ENCODE measurements at regions of chr10 and their contacts with region 1.

Region 1: GRCh38 chr10:124741281-124741921 is 2.8 kb downstream of the FAM53B start:
- DNase-seq: peak; percentile 86
- H3K4me3 Mint-ChIP-seq: peak overlapping the region; percentile 85
- H3K27ac Mint-ChIP-seq: peak overlapping the region; percentile 73
- H3K4me1 Mint-ChIP-seq: peaks cover 48% of the 10 kb centered on the region
- H3K27me3 Mint-ChIP-seq: no peaks in the 10 kb centered on the region
- CTCF ChIP-seq: peak; percentile 79

Region 2: DNA sequence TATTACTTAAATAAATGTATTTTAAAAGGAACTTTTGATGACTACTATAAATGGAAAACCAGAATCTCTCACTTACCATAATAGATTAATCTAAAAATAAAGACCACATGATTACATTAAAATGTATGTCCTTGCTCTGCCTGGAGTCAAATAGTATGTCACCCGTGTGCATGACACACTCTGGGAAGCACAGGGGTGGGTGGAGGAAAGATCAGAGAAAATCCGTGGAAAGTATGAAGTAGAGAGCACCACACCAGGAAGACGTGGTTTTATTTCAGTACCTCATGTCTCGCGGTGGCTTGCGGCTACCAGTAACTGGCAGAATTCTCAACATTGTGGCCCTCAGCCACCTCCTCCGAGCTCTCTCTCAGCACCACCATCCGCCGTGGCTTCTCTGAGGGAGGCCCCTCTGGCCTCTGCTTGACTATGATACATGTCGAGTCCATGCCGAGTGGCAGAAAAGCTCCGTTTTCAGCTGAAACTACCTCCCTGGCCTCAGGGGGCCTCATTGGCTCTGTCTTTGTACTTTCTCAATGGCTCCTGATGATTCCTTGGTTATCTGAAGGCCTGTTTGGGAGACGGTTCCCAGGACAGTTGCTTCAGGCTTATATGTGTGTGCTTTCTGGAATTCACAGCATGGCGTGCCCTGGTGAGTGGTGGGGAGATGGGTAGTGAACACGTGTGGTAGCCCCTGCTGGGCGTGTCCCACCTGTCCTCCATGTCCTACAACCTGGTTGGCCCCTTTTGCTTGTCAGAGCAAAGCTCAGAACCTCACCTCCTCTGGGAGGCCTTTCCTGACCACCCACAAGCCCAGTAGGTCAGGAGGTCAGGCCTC is 230.0 kb before region 1 on chr10:
- CTCF ChIA-PET with region 1: no interaction called
- POLR2A ChIA-PET with region 1: no interaction called
- intact Hi-C with region 1: no loop called
- DNase-seq: no peak
- H3K4me3 Mint-ChIP-seq: no peak overlapping the region
- H3K27ac Mint-ChIP-seq: no peak overlapping the region
- H3K4me1 Mint-ChIP-seq: peaks cover 5% of the 10 kb centered on the region
- H3K27me3 Mint-ChIP-seq: no peaks in the 10 kb centered on the region
- CTCF ChIP-seq: no peak

Region 3: GRCh38 chr10:124539935-124540641 is 201.3 kb before region 1 on chr10:
- CTCF ChIA-PET with region 1: interaction called, 45 read pairs
- POLR2A ChIA-PET with region 1: interaction called, 4 read pairs
- intact Hi-C with region 1: loop called (anchors 1 kb)
- DNase-seq: peak; percentile 34
- H3K4me3 Mint-ChIP-seq: no peak overlapping the region
- H3K27ac Mint-ChIP-seq: no peak overlapping the region
- H3K4me1 Mint-ChIP-seq: no peaks in the 10 kb centered on the region
- H3K27me3 Mint-ChIP-seq: no peaks in the 10 kb centered on the region
- CTCF ChIP-seq: peak; percentile 65

Region 4: DNA sequence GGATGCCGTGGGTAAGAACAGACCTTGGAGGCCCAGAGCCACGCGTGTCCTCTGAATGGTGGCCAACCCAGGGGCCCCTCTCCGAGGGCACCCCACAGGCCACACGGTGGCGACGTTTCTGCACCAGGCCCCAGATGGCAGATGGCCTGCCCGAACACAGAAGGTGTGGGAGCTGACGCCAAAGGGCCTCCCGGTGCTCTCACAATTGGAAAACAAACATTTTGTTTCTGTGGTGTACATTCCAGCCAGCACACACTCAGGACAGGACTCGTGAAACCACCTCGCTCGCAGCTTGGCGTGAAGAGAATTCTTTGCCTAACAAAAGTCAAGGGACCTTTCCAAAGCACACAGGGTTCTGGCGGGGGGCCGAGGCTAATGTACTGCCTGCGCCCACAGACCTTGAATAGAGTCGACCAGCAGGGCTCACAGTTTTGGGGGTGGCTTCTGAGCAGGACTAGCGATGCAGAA is 109.3 kb before region 1 on chr10:
- CTCF ChIA-PET with region 1: interaction called, 9 read pairs
- POLR2A ChIA-PET with region 1: interaction called, 4 read pairs
- intact Hi-C with region 1: loop called (anchors 1 kb)
- DNase-seq: peak; percentile 22
- H3K4me3 Mint-ChIP-seq: no peak overlapping the region
- H3K27ac Mint-ChIP-seq: peak overlapping the region; percentile 93
- H3K4me1 Mint-ChIP-seq: peaks cover 18% of the 10 kb centered on the region
- H3K27me3 Mint-ChIP-seq: no peaks in the 10 kb centered on the region
- CTCF ChIP-seq: peak; percentile 38

Region 5: GRCh38 chr10:124688889-124689670 is 52.3 kb before region 1 on chr10:
- CTCF ChIA-PET with region 1: interaction called, 18 read pairs
- POLR2A ChIA-PET with region 1: interaction called, 4 read pairs
- intact Hi-C with region 1: no loop called
- DNase-seq: peak; percentile 18
- H3K4me3 Mint-ChIP-seq: no peak overlapping the region
- H3K27ac Mint-ChIP-seq: no peak overlapping the region
- H3K4me1 Mint-ChIP-seq: peaks cover 10% of the 10 kb centered on the region
- H3K27me3 Mint-ChIP-seq: no peaks in the 10 kb centered on the region
- CTCF ChIP-seq: no peak

Region 6: DNA sequence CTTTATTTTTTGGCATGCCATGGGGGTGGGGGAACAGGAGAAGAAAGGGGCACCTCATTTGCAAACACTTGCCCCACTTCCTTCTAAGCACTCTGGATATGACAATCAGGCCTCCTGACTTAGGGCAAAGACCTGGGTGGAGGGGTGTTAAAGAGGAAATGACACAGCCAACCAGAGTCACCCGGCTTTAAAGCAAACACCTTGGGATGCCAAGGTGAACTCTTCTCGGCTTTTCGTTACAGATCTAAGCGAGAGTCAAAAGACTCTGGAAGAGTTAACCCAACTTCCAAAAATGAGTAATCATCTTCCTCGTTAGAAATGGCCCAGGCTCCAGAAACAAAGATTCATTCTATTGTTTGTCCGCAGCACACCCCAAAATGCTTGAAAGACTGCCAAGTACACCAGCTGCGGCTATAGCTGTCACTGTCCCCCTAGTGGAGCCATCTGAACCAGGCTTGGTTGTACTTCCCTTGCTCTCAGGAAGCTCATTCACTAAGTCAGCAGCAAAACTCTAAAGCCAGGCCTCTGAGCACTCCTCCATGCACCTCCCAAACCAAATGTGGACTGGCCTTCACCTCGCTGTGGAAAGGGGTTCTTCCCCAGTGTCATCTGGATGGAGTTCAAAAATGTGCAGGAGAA is 22.1 kb before region 1 on chr10:
- CTCF ChIA-PET with region 1: interaction called, 15 read pairs
- POLR2A ChIA-PET with region 1: interaction called, 24 read pairs
- intact Hi-C with region 1: no loop called
- DNase-seq: peak; percentile 90
- H3K4me3 Mint-ChIP-seq: peak overlapping the region; percentile 36
- H3K27ac Mint-ChIP-seq: peak overlapping the region; percentile 78
- H3K4me1 Mint-ChIP-seq: peaks cover 39% of the 10 kb centered on the region
- H3K27me3 Mint-ChIP-seq: no peaks in the 10 kb centered on the region
- CTCF ChIP-seq: no peak

Region 7: DNA sequence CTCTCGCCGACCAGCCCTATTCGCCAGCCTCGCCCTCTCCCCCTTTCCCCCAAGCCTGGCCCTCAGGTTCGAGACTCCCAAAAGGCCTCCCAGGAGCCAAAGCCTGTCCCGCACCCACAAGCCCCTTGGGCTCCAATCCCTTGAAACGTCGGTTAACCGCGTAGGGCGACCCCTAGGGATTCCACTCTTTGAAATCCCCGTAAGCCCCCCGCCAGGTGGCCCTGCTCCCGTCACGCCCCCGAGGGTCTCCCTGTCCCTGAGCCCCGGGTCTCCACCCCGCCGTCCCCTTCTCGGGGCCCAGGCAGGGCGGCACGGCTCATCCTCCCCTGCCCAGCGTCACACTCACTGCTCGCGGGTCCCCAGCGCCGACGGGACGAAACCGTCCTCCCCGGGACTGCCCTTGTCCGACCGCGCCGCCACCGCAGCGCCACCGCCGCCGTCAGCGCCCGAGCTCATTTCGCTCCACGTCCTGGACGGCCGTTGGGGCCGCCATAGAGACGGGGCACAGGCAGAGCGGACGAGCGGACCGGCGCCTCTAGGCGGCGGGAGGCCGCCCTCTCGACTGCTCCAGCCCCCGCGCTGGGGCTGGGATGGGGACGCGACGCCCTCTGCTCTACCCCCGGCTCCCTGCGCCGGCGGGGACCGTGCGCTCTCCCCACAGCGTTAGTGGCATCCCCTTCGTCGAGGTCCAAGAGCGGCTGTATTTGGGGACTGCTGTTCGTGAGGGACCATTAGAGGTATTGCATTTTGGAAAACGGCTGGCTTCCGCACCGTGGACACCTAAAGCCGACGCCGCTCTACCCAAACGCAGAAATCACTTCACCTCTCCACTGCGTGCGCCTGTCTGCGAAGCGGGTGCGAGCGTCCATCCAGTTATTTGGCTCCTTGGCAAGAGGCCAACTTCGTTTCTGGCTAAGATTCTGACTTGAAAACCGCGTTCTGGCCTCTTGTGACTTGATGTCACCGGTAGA is 50.3 kb after region 1 on chr10 and contains the start of gene EEF1AKMT2:
- CTCF ChIA-PET with region 1: interaction called, 3 read pairs
- POLR2A ChIA-PET with region 1: interaction called, 23 read pairs
- intact Hi-C with region 1: no loop called
- DNase-seq: peak; percentile 85
- H3K4me3 Mint-ChIP-seq: peak within 1 kb of the TSS; percentile 95
- H3K27ac Mint-ChIP-seq: peak within 1 kb of the TSS; percentile 99
- H3K4me1 Mint-ChIP-seq: peaks cover 8% of the 10 kb centered on the region
- H3K27me3 Mint-ChIP-seq: no peaks in the 10 kb centered on the region
- CTCF ChIP-seq: peak; percentile 29
- total RNA-seq, gene EEF1AKMT2: 17.5 and 18.6 TPM in 2 replicates

Measured in MCF 10A (cell line).